SK-N-SH (cell line): ENCODE measurements at regions of chr4 and their contacts with region 1.

Region 1: DNA sequence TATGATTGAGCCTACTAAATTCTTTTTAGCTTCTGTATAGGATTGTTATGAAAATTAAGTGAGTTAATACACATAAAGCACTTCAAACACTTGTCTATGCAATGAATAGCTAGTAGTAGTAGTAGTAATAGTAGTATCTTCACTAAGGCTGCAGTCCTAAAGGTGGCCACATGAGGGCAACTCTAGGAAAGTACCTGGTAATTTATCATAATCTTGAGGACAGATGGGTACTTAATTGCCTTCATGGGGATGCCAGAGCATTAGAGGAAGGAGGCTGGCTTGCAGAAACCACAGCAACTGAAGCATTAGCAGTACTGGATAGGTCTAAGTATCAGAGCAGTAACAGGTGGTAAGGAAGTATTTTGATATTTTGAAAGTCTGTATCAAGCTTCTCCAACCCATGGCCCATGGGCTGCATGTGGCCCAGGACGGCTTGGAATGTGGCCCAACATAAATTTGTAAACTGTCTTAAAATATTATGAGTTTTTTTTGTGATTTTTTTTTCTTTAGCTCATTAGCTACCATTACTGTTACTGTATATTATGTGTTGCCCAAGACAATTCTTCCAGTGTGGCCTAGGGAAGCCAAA is 17.3 kb downstream of the NIPAL1 start:
- DNase-seq: peak; percentile 40
- H3K4me3 ChIP-seq: no peak overlapping the region
- H3K27ac ChIP-seq: no peak overlapping the region
- H3K4me1 ChIP-seq: no peaks in the 10 kb centered on the region
- H3K27me3 ChIP-seq: no peaks in the 10 kb centered on the region
- CTCF ChIP-seq: peak; percentile 65
- EP300 ChIP-seq: no peak
- RAD21 ChIP-seq: peak; percentile 36

Region 2: GRCh38 chr4:48016141-48017103 is 17.5 kb before region 1 on chr4 and contains the starts of genes CNGA1 and NIPAL1:
- CTCF ChIA-PET with region 1: interaction called, 12 read pairs
- POLR2A ChIA-PET with region 1: no interaction called
- DNase-seq: peak; percentile 94
- H3K4me3 ChIP-seq: peak within 1 kb of the TSS; percentile 87 to 88
- H3K27ac ChIP-seq: peak within 1 kb of the TSS in 1 of 2 experiments; percentile 51; a peak in 3 of 4 replicates
- H3K4me1 ChIP-seq: peaks cover 0 to 10% of the 10 kb centered on the region in 2 experiments; a peak in 1 of 4 replicates
- H3K27me3 ChIP-seq: no peaks in the 10 kb centered on the region
- CTCF ChIP-seq: peak; percentile 58
- EP300 ChIP-seq: no peak
- RAD21 ChIP-seq: peak; percentile 40
- polyA plus RNA-seq, gene CNGA1: 0.23 and 0.45 TPM in 2 replicates
- polyA plus RNA-seq, gene NIPAL1: 1.8 and 2.0 TPM in 2 replicates

Region 3: GRCh38 chr4:48047421-48047844 is 13.5 kb after region 1 on chr4:
- CTCF ChIA-PET with region 1: interaction called, 11 read pairs
- POLR2A ChIA-PET with region 1: no interaction called
- DNase-seq: no peak
- H3K4me3 ChIP-seq: no peak overlapping the region
- H3K27ac ChIP-seq: no peak overlapping the region
- H3K4me1 ChIP-seq: peaks cover 0 to 8% of the 10 kb centered on the region in 2 experiments; a peak in 1 of 4 replicates
- H3K27me3 ChIP-seq: no peaks in the 10 kb centered on the region
- CTCF ChIP-seq: no peak
- EP300 ChIP-seq: no peak
- RAD21 ChIP-seq: no peak